ENCODE measurements at regions of chr9 and their contacts with region 1.

Region 1: DNA sequence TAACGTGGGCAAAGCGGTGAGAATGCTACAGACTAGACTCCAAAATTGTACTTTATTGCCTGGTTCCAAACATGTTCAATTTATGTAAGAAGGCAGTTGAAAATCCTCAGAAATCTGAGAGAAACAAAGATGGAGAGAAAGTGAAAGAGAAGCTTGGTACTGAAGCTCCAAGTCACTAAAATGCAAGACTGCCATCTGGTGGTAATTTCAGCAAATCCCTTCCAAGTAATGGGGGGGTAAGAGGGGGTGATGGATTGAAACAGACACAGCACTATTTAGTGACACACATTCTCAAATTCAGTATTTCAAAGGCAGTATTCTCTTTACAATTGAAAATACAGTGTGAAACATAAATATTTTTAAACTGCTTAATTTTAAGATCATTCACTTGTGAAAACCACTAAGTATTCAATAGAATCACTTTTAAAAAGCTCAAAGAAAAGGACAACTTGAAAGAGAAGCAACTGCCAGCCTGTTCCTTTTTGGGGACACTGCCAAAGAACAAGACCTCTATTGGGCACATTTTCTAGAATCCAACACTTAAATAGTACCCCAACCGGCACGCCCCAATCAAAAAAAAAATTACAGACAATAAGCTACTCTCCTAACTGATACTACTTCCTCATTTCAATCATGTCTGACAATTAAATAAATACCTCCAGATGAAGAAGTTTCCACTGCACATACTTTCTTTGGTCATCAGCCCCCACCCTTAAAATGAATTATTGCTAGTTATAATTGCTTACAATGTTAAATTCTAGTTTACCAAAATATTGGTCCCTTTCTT is 131.5 kb downstream of the AGTPBP1 start:
- DNase-seq: peak; percentile 51
- ATAC-seq: peak; percentile 76
- H3K4me3 ChIP-seq: no peak overlapping the region
- H3K27ac ChIP-seq: no peak overlapping the region
- H3K4me1 ChIP-seq: no peaks in the 10 kb centered on the region
- H3K27me3 ChIP-seq: no peaks in the 10 kb centered on the region
- CTCF ChIP-seq: peak; percentile 67 to 89 (median 71)
- POLR2A ChIP-seq: no peak
- RAD21 ChIP-seq: peak; percentile 82

Region 2: GRCh38 chr9:84697509-84698114 is 912.7 kb before region 1 on chr9:
- CTCF ChIA-PET with region 1: interaction called, 5 read pairs
- POLR2A ChIA-PET with region 1: no interaction called
- RAD21 ChIA-PET with region 1: no interaction called
- intact Hi-C with region 1: loop called (anchors 5 kb)
- DNase-seq: peak; percentile 32
- ATAC-seq: peak; percentile 98
- H3K4me3 ChIP-seq: no peak overlapping the region
- H3K27ac ChIP-seq: no peak overlapping the region
- H3K4me1 ChIP-seq: no peaks in the 10 kb centered on the region; a peak in 1 of 4 replicates
- H3K27me3 ChIP-seq: no peaks in the 10 kb centered on the region
- CTCF ChIP-seq: peak; percentile 54 to 83 (median 74); a peak in 5 of 6 replicates
- POLR2A ChIP-seq: no peak
- RAD21 ChIP-seq: peak; percentile 78

Region 3: DNA sequence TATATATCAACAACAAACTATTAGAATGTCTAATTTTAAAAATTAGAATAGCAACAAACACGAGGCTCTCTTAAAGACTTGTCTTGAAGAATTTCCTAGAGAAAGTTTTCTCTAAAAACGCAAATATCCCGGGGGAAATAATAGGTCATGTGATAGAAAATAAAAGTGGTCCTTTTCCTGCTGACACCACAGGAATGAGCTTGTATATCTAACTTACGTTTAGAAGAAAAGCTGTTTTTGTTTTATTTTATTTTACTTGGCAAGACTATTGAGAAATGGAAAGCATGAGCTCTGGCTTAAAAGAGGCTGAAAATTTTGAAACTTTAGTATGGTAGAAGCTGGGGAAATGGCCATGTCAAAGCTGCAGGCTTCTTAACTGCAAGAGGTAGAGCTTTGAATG is 333.5 kb before region 1 on chr9:
- CTCF ChIA-PET with region 1: no interaction called
- POLR2A ChIA-PET with region 1: no interaction called
- RAD21 ChIA-PET with region 1: no interaction called
- intact Hi-C with region 1: loop called (anchors 10 kb)
- DNase-seq: no peak
- ATAC-seq: no peak
- H3K4me3 ChIP-seq: no peak overlapping the region
- H3K27ac ChIP-seq: no peak overlapping the region
- H3K4me1 ChIP-seq: no peaks in the 10 kb centered on the region
- H3K27me3 ChIP-seq: peaks cover 8% of the 10 kb centered on the region; the same call in 1 of the 2 replicates
- CTCF ChIP-seq: no peak
- POLR2A ChIP-seq: no peak
- RAD21 ChIP-seq: no peak

Region 4: GRCh38 chr9:85425153-85425611 is 185.1 kb before region 1 on chr9:
- CTCF ChIA-PET with region 1: interaction called, 15 read pairs
- POLR2A ChIA-PET with region 1: no interaction called
- RAD21 ChIA-PET with region 1: no interaction called
- intact Hi-C with region 1: no loop called
- DNase-seq: peak; percentile 69
- ATAC-seq: peak; percentile 97
- H3K4me3 ChIP-seq: no peak overlapping the region
- H3K27ac ChIP-seq: no peak overlapping the region
- H3K4me1 ChIP-seq: no peaks in the 10 kb centered on the region
- H3K27me3 ChIP-seq: peaks cover 15% of the 10 kb centered on the region
- CTCF ChIP-seq: peak; percentile 79 to 86 (median 83)
- POLR2A ChIP-seq: no peak
- RAD21 ChIP-seq: peak; percentile 83

Region 5: GRCh38 chr9:85554349-85554748 is 55.9 kb before region 1 on chr9:
- CTCF ChIA-PET with region 1: no interaction called
- POLR2A ChIA-PET with region 1: no interaction called
- RAD21 ChIA-PET with region 1: no interaction called
- intact Hi-C with region 1: no loop called
- DNase-seq: no peak
- ATAC-seq: no peak
- H3K4me3 ChIP-seq: no peak overlapping the region
- H3K27ac ChIP-seq: no peak overlapping the region
- H3K4me1 ChIP-seq: no peaks in the 10 kb centered on the region
- H3K27me3 ChIP-seq: no peaks in the 10 kb centered on the region
- CTCF ChIP-seq: no peak
- POLR2A ChIP-seq: no peak
- RAD21 ChIP-seq: no peak

Region 6: DNA sequence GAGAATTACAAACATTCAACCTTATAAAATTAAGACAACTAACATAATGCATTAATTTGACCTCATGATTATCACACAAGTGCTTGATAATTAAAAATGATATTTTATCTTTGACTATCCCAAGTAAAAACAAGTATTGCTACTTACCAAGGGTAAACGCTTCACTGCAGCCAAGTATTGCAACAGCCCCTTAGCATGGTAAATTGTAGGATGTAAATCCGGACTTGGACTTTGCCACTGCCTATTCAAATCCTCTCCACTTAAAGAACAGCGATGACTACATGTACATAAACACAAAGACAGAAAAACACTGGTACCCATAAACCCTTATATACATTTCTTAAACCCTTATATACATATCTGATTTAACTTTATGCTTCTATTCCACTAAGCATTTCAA is 23.6 kb before region 1 on chr9:
- CTCF ChIA-PET with region 1: interaction called, 10 read pairs
- POLR2A ChIA-PET with region 1: no interaction called
- RAD21 ChIA-PET with region 1: no interaction called
- intact Hi-C with region 1: no loop called
- DNase-seq: no peak
- ATAC-seq: no peak
- H3K4me3 ChIP-seq: no peak overlapping the region
- H3K27ac ChIP-seq: no peak overlapping the region
- H3K4me1 ChIP-seq: no peaks in the 10 kb centered on the region
- H3K27me3 ChIP-seq: no peaks in the 10 kb centered on the region
- CTCF ChIP-seq: no peak
- POLR2A ChIP-seq: no peak
- RAD21 ChIP-seq: no peak

Region 7: GRCh38 chr9:85729882-85730281 is 119.6 kb after region 1 on chr9:
- CTCF ChIA-PET with region 1: no interaction called
- POLR2A ChIA-PET with region 1: no interaction called
- RAD21 ChIA-PET with region 1: no interaction called
- intact Hi-C with region 1: no loop called
- DNase-seq: no peak
- ATAC-seq: no peak
- H3K4me3 ChIP-seq: no peak overlapping the region
- H3K27ac ChIP-seq: no peak overlapping the region
- H3K4me1 ChIP-seq: no peaks in the 10 kb centered on the region
- H3K27me3 ChIP-seq: no peaks in the 10 kb centered on the region
- CTCF ChIP-seq: no peak
- POLR2A ChIP-seq: no peak
- RAD21 ChIP-seq: no peak

Region 8: DNA sequence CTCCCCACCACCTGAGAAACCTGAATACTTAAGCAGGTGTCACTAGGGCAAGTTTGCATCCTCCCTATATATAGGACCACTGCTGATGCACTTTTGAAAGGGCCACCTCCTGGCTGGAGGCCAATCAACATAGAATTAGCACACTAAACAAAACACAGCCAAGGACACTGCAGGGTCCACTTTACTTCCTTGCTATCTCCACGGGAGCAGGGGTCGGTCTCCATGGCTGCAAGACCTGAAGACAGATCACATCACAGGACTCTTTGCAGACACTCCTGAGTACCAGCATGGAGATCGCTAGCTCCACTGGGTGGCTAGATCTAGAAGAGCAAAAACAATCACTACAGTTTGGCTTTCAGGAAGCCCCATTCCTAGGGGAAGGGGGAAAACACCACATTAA is 576.9 kb after region 1 on chr9:
- CTCF ChIA-PET with region 1: no interaction called
- POLR2A ChIA-PET with region 1: no interaction called
- RAD21 ChIA-PET with region 1: no interaction called
- intact Hi-C with region 1: no loop called
- DNase-seq: no peak
- ATAC-seq: peak; percentile 53; the same call in 1 of the 2 replicates
- H3K4me3 ChIP-seq: no peak overlapping the region
- H3K27ac ChIP-seq: no peak overlapping the region
- H3K4me1 ChIP-seq: peaks cover 0 to 2% of the 10 kb centered on the region in 2 experiments; a peak in 2 of 4 replicates
- H3K27me3 ChIP-seq: no peaks in the 10 kb centered on the region
- CTCF ChIP-seq: peak in 2 of 3 experiments; percentile 32 to 34; a peak in 2 of 6 replicates
- POLR2A ChIP-seq: no peak
- RAD21 ChIP-seq: peak; percentile 68

Measured in HCT116 (cell line).